Activated CD8-positive, alpha-beta memory T cell treated with anti-CD3 and anti-CD28 coated beads, Interleukin-2, amount 10 ng/mL, durations not matched to agents 7 days and 5 days (primary cell): ENCODE measurements at regions of chr6 and their contacts with region 1.

Region 1: DNA sequence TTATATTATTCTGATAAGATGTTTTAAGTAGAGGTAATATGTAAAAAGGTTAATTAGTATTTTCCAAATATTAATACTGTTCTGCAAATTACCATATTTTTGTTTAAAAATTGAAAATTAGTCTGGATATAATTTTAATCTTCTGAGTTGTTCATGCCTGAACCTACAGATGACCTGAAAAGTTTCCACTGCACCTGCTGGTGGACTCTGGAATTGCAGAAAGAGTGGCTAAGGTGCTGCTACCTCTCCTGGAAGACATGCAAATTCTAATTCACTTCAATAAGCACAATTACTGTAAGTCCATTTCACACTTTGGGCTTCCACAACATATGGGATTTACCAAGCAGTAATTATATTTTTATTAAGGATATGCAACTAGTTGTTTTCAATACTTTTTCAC is 77.7 kb upstream of the OLIG3 start:
- DNase-seq: peak; percentile 62
- ATAC-seq: no peak
- H3K4me3 Mint-ChIP-seq: no peak overlapping the region
- H3K27ac Mint-ChIP-seq: no peak overlapping the region
- H3K4me1 Mint-ChIP-seq: no peaks in the 10 kb centered on the region
- H3K27me3 Mint-ChIP-seq: peaks cover 44% of the 10 kb centered on the region

Region 2: DNA sequence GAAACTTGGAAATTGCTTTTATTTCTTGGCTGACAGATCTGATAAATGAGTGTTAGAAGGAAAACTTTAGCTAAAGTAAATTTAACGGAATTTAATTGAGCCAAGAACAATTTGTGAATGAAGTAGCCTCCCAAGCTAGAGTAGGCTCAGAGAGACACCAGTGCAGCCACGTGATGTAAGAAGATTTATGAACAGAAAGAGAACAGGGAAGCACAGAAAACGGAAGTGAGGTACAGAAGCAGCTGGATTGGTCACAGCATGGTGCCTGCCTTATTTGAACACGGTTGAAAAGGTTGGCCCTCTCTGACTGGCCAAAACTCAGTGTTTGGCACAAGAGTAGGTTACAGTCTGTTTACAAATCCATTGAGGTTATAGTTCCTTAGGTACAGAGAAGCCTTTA is 323.2 kb before region 1 on chr6:
- CTCF ChIA-PET with region 1: no interaction called
- DNase-seq: no peak
- ATAC-seq: no peak
- H3K4me3 Mint-ChIP-seq: no peak overlapping the region
- H3K27ac Mint-ChIP-seq: no peak overlapping the region
- H3K4me1 Mint-ChIP-seq: peaks cover 7% of the 10 kb centered on the region
- H3K27me3 Mint-ChIP-seq: peaks cover 17% of the 10 kb centered on the region

Region 3: DNA sequence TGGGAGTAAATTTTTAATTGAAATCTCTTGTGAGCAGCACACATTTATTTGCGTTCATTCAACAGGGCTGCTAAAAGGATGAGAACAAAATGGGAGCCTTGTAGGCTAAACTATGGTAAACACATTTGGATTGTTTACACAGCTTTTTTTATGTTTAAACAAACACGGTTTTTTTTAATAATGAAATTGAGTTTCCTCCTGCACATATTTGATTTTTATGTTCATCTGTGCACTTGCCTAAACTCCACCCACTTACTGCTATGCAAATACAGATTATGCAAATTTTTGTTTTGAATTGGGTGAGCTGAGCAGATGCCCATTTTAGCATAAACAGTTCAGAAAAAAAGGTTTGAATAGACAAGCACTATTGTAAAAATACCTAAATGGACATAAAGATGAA is 169.6 kb before region 1 on chr6:
- CTCF ChIA-PET with region 1: no interaction called
- DNase-seq: no peak
- ATAC-seq: no peak
- H3K4me3 Mint-ChIP-seq: no peak overlapping the region
- H3K27ac Mint-ChIP-seq: no peak overlapping the region
- H3K4me1 Mint-ChIP-seq: peaks cover 13% of the 10 kb centered on the region
- H3K27me3 Mint-ChIP-seq: peaks cover 2% of the 10 kb centered on the region

Region 4: DNA sequence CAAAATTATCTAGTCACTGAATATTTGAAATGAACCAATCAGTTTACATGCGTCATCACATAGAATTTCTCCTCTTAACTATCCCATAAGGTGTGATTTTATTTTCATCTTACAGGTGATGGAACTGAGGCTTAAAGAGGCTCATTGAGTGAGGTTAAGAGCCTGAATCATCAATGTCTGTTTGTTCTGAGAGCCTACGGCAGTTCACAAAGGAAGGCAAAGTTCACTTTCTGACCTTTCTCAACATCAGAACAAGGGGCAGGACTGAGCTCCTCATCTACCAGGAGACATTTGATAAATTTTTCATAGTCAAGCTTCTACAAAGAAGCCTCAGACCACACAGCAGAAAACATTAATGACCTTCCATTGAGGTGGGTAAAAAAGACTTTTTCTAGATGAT is 22.7 kb before region 1 on chr6:
- CTCF ChIA-PET with region 1: no interaction called
- DNase-seq: no peak
- ATAC-seq: no peak
- H3K4me3 Mint-ChIP-seq: no peak overlapping the region
- H3K27ac Mint-ChIP-seq: no peak overlapping the region
- H3K4me1 Mint-ChIP-seq: no peaks in the 10 kb centered on the region
- H3K27me3 Mint-ChIP-seq: peaks cover 17% of the 10 kb centered on the region

Region 5: DNA sequence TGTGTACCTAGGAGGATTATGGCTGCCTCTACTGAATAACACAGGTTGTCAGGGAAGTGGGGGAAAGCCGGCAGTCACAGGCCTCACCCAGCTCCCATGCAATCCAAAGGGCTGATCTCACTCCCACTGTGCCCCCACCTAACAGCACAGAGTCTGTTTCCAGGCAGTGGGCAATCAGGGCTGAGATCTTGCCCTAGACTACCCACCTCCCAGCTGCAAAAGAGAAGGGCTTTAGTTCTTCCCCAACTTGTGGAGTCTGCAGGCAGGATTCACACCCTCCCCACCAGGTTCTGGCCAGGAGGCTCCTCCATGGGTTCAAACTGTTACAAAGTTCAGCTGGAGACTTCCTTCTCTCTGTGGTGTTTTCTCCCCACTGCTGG is 11.7 kb before region 1 on chr6:
- CTCF ChIA-PET with region 1: interaction called, 10 read pairs
- DNase-seq: no peak
- ATAC-seq: no peak
- H3K4me3 Mint-ChIP-seq: no peak overlapping the region
- H3K27ac Mint-ChIP-seq: peak overlapping the region; percentile 22
- H3K4me1 Mint-ChIP-seq: peaks cover 15% of the 10 kb centered on the region
- H3K27me3 Mint-ChIP-seq: peaks cover 5% of the 10 kb centered on the region

Region 6: GRCh38 chr6:137589067-137589848 is 17.4 kb after region 1 on chr6:
- CTCF ChIA-PET with region 1: interaction called, 13 read pairs
- DNase-seq: peak; percentile 81
- ATAC-seq: peak; percentile 100
- H3K4me3 Mint-ChIP-seq: no peak overlapping the region
- H3K27ac Mint-ChIP-seq: no peak overlapping the region
- H3K4me1 Mint-ChIP-seq: peaks cover 15% of the 10 kb centered on the region
- H3K27me3 Mint-ChIP-seq: peaks cover 35% of the 10 kb centered on the region